Posterior vena cava (tissue), 2 donors: ENCODE measurements at regions of chr16 and their contacts with region 1.

Region 1: DNA sequence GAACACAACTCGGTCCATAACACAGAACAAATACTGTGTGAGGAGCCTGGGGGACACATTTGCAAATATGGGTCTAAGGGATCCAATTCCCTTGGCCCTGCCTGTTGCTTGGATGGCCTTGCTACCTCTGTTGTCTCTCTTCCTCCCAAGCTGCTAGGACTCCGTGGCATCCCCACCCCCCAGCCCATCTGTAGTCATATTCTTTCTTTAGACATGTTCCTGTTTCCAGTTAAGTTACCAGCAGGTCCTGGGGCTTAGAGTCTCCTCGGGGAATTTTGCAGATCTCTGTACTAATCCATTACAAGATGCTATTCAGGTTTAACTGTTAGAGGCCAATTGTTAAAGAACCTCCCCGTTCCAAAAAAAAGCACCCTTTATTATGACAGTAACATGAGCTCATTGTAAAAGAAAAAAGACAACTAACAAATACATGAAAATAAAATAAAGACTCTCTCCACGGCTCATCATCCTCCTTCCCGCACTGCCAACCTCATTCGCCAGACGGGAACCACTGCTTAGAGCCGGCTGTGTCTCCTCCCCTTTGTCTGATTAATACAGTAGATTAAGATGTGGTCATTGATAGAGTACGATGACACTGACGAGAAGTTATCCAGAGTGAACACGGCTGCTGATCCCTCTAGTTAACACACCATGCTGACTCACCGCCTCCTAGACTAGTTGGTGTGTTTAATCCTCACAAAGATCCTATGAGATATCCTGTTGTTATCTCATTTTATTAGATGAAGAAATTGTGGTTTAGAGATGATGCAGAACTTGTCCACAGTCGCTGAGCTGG is 22.2 kb downstream of the HS3ST4 start:
- DNase-seq: no peak

Region 2: GRCh38 chr16:25656639-25657038 is 57.3 kb before region 1 on chr16:
- intact Hi-C with region 1: no loop called
- DNase-seq: no peak

Region 3: DNA sequence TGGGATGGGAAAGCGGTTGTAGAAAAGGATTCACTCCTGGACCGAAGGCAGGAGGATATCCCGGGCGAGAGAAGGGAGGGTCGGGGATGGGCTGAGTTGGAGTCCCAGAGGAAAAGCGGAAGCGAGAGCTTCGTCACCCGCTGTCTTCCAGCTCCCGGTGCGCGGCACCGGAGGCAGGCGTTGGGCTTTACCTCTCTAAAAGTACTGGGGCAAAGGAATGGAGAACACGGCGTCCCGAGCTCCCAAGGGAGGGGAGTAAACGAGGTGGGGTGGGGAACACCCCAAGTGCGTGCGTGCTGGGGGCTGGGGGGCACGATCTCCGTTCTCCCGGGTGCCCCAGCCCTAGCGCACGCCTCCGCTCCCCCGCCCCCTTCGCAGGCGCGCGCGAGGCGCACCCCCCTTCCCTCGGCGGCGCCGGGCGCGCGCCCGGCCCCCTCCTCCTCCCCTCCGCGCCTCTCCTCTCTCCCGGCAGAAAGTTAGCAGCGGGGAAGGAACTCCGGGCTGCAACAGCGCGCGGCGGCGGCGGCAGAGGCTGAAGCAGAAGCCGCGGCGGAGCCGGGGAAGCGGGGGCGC is 22.4 kb before region 1 on chr16 and contains the start of gene HS3ST4:
- intact Hi-C with region 1: loop called in 1 of 2 experiments (anchors 1 kb)
- DNase-seq: no peak
- total RNA-seq, gene HS3ST4: not detected